Naive thymus-derived CD4-positive, alpha-beta T cell (primary cell): ENCODE measurements at regions of chr2 and their contacts with region 1.

Region 1: DNA sequence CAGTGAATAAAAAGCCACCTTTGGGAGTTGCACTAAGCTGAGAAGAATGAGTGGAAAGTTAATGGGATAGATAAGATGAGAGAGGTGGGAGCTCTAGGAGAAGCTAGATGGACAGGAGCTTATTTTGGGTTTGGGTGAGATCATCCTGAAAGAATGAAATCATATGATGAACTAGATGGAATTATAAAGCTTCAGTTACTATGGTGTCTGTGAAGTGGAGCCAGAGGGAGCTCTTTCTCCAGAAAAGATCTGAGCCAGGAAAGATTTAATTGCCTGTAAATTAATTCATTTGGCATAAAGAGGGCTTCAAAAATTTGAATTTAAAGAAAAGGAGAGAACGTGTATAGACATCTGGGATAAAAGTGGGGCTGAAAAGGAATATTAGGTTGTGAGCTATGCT is 10.3 kb downstream of the DNAH6 start:
- DNase-seq: peak in 3 of 9 donors; percentile 32 to 45 (median 35)
- ATAC-seq: no peak
- H3K4me3 ChIP-seq: no peak overlapping the region
- H3K4me3 Mint-ChIP-seq: peak overlapping the region in 6 of 10 donors; percentile 17 to 46 (median 30)
- H3K27ac ChIP-seq: no peak overlapping the region
- H3K27ac Mint-ChIP-seq: peak overlapping the region in 8 of 9 donors; percentile 0 to 82 (median 53)
- H3K4me1 ChIP-seq: peaks cover 0 to 9% of the 10 kb centered on the region in 2 donors
- H3K4me1 Mint-ChIP-seq: peaks cover 2 to 36% (median 28%) of the 10 kb centered on the region in 7 donors
- H3K27me3 ChIP-seq: no peaks in the 10 kb centered on the region
- H3K27me3 Mint-ChIP-seq: peaks cover 0 to 16% (median 0%) of the 10 kb centered on the region in 5 donors

Region 2: GRCh38 chr2:84516234-84516986 is 10.2 kb before region 1 on chr2 and contains the start of gene DNAH6:
- CTCF ChIA-PET with region 1: interaction called, 7 read pairs
- POLR2A ChIA-PET with region 1: interaction called, 4 read pairs
- intact Hi-C with region 1: loop called in 1 of 2 experiments (anchors 1 kb)
- DNase-seq: peak; percentile 67 to 94 (median 89)
- ATAC-seq: peak; percentile 99
- H3K4me3 ChIP-seq: peak within 1 kb of the TSS; percentile 78
- H3K4me3 Mint-ChIP-seq: peak within 1 kb of the TSS; percentile 79 to 93 (median 90)
- H3K27ac ChIP-seq: peak within 1 kb of the TSS; percentile 75
- H3K27ac Mint-ChIP-seq: peak within 1 kb of the TSS; percentile 66 to 98 (median 93)
- H3K4me1 ChIP-seq: peaks cover 5 to 6% of the 10 kb centered on the region in 2 donors
- H3K4me1 Mint-ChIP-seq: peaks cover 6 to 27% (median 23%) of the 10 kb centered on the region in 7 donors
- H3K27me3 ChIP-seq: no peaks in the 10 kb centered on the region
- H3K27me3 Mint-ChIP-seq: peaks cover 0 to 41% (median 0%) of the 10 kb centered on the region in 5 donors
- total RNA-seq, gene DNAH6: 0.73 to 2.3 (median 1.1) TPM

Region 3: GRCh38 chr2:84539729-84540128 is 13.2 kb after region 1 on chr2:
- CTCF ChIA-PET with region 1: interaction called, 4 read pairs
- POLR2A ChIA-PET with region 1: interaction called, 3 read pairs
- intact Hi-C with region 1: loop called in 1 of 2 experiments (anchors 1 kb)
- DNase-seq: no peak
- ATAC-seq: no peak
- H3K4me3 ChIP-seq: no peak overlapping the region
- H3K4me3 Mint-ChIP-seq: no peak overlapping the region
- H3K27ac ChIP-seq: no peak overlapping the region
- H3K27ac Mint-ChIP-seq: peak overlapping the region in 3 of 9 donors; percentile 4 to 19 (median 19)
- H3K4me1 ChIP-seq: peaks cover 4 to 10% of the 10 kb centered on the region in 2 donors
- H3K4me1 Mint-ChIP-seq: peaks cover 5 to 15% (median 14%) of the 10 kb centered on the region in 7 donors
- H3K27me3 ChIP-seq: no peaks in the 10 kb centered on the region
- H3K27me3 Mint-ChIP-seq: peaks cover 0 to 6% (median 0%) of the 10 kb centered on the region in 5 donors

Region 4: DNA sequence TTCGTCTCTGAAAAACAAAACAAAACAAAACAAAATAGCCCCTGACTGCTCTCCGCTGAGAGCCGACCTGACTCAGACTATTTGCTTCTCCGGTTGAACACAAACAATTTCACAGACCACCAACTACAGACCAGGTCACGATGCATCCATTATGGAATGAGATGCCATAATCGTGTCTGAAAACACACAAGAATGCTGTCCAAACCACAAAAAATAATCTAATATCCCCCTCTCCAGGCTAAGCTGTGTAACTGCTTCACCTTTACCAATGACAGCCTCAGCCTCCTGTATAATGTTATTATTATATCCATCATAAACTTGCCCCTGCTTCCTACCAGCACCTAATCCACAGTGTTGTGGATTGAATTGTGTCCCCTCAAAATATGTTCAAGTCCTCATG is 104.5 kb after region 1 on chr2:
- CTCF ChIA-PET with region 1: interaction called, 4 read pairs
- POLR2A ChIA-PET with region 1: interaction called, 5 read pairs
- intact Hi-C with region 1: loop called in 1 of 2 experiments (anchors 1 kb)
- DNase-seq: peak in 6 of 9 donors; percentile 21 to 57 (median 50)
- ATAC-seq: peak; percentile 69
- H3K4me3 ChIP-seq: no peak overlapping the region
- H3K4me3 Mint-ChIP-seq: peak overlapping the region in 4 of 10 donors; percentile 5 to 60 (median 34)
- H3K27ac ChIP-seq: no peak overlapping the region
- H3K27ac Mint-ChIP-seq: peak overlapping the region in 5 of 9 donors; percentile 12 to 80 (median 33)
- H3K4me1 ChIP-seq: peaks cover 0 to 15% of the 10 kb centered on the region in 2 donors
- H3K4me1 Mint-ChIP-seq: peaks cover 16 to 56% (median 52%) of the 10 kb centered on the region in 7 donors
- H3K27me3 ChIP-seq: no peaks in the 10 kb centered on the region
- H3K27me3 Mint-ChIP-seq: peaks cover 0 to 2% (median 0%) of the 10 kb centered on the region in 5 donors

Region 5: DNA sequence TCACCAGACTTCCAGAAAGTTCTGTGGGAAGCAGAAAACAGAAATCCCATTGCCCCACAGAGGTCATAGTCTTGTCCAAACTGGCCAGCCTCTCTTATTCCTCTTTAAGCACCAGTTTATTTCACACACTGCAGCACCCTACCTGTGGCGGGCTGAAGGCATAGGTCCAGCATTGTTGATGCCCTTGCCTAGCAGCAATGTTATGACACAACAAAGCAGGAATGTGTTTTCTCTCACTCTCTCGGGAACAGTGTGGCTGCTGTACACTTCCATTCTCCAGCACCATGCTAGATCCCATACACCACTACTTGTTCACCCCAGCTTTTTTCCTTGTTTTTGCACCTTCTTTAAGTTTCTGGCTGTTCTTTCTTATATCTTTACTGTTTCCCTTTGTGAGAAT is 171.3 kb after region 1 on chr2:
- CTCF ChIA-PET with region 1: no interaction called
- POLR2A ChIA-PET with region 1: no interaction called
- intact Hi-C with region 1: no loop called
- DNase-seq: no peak
- ATAC-seq: no peak
- H3K4me3 ChIP-seq: no peak overlapping the region
- H3K4me3 Mint-ChIP-seq: no peak overlapping the region
- H3K27ac ChIP-seq: no peak overlapping the region
- H3K27ac Mint-ChIP-seq: peak overlapping the region in 5 of 9 donors; percentile 23 to 70 (median 33)
- H3K4me1 ChIP-seq: peaks cover 20 to 28% of the 10 kb centered on the region in 2 donors
- H3K4me1 Mint-ChIP-seq: peaks cover 8 to 71% (median 49%) of the 10 kb centered on the region in 7 donors
- H3K27me3 ChIP-seq: no peaks in the 10 kb centered on the region
- H3K27me3 Mint-ChIP-seq: peaks cover 0 to 3% (median 0%) of the 10 kb centered on the region in 5 donors